Activated T-helper 1 cell treated with anti-CD3 and anti-CD28 coated beads, Interleukin-12 subunit alpha, Interleukin-12 subunit beta, Interleukin-2, Interleukin-4 antibody, amounts not matched to agents 30 ng/mL and 10 ng/mL and 1 ng/mL, durations not matched to agents 14 hours and 24 hours and 36 hours (primary cell): ENCODE measurements at regions of chr4 and their contacts with region 1.

Region 1: DNA sequence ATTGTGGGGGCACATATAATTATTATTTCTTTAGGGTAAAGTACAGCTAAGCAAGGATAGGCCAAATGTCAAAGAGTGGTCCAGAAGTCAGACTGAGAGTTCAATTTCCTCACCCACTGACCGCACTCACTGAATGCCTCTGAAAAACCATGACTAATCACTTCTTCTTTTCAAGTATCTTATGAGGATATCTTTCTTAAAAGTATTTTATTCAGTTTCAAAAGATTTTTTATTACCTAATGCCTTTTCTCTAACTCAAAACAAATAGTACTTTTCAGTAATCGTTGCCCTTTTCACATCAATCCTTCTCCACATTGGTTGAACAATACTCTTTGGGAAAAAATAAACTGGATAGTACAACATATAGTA is 61.7 kb upstream of the CAMK2D start:
- DNase-seq: no peak
- H3K4me3 Mint-ChIP-seq: no peak overlapping the region
- H3K27ac Mint-ChIP-seq: no peak overlapping the region
- H3K4me1 Mint-ChIP-seq: peaks cover 38% of the 10 kb centered on the region
- H3K27me3 Mint-ChIP-seq: no peaks in the 10 kb centered on the region

Region 2: DNA sequence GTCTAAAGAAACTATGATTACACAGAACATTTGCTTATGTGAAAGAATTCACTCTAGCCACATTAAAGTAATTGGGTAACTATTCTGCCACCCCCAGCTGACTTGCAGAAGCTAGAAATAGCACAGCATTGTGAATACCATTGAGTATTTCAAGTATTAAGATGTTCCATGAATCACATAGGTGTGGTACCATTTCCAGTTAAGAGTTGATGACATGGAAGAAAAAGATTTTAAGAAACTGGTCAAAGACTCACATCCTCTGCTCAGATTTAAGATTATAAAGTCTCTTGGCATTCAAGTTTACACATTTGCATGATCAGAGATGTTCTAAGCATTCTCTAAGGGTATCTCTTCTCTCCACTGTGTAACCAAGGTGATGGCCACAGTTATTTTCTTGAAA is 349.3 kb before region 1 on chr4:
- intact Hi-C with region 1: loop called (anchors 1 kb)
- DNase-seq: no peak
- H3K4me3 Mint-ChIP-seq: no peak overlapping the region
- H3K27ac Mint-ChIP-seq: peak overlapping the region; percentile 82
- H3K4me1 Mint-ChIP-seq: peaks cover 39% of the 10 kb centered on the region
- H3K27me3 Mint-ChIP-seq: no peaks in the 10 kb centered on the region

Region 3: DNA sequence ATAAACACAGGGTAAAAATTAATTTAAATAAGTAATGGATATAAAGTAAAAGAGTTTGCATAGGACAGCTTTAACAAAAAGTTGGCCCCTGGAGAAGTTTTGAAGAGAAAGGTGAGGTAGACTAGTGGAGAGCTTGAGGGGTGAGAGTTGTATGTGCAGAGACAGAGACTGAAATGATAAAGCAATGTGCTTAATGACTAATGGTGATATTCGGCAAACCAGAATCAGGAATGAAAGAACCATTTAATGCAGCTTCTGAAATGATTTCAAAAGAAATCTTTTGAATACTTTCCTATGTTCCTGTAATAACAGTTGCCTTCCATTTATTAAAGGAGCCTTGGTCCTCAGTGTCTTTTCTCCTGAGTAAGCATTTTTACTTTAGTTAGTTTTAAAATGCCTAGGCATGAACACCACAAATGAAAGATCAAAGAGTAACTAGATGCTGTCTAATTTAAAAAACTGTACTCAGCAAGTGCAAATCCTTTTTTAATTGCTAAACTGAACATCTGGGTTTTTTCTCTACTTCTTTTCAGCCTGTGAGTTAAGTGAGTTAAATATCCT is 90.2 kb before region 1 on chr4:
- intact Hi-C with region 1: loop called (anchors 1 kb)
- DNase-seq: no peak
- H3K4me3 Mint-ChIP-seq: no peak overlapping the region
- H3K27ac Mint-ChIP-seq: peak overlapping the region; percentile 19
- H3K4me1 Mint-ChIP-seq: peaks cover 68% of the 10 kb centered on the region
- H3K27me3 Mint-ChIP-seq: no peaks in the 10 kb centered on the region

Region 4: GRCh38 chr4:113781439-113782040 is 41.7 kb before region 1 on chr4:
- intact Hi-C with region 1: loop called (anchors 5 kb)
- DNase-seq: no peak
- H3K4me3 Mint-ChIP-seq: no peak overlapping the region
- H3K27ac Mint-ChIP-seq: no peak overlapping the region
- H3K4me1 Mint-ChIP-seq: peaks cover 10% of the 10 kb centered on the region
- H3K27me3 Mint-ChIP-seq: no peaks in the 10 kb centered on the region

Region 5: DNA sequence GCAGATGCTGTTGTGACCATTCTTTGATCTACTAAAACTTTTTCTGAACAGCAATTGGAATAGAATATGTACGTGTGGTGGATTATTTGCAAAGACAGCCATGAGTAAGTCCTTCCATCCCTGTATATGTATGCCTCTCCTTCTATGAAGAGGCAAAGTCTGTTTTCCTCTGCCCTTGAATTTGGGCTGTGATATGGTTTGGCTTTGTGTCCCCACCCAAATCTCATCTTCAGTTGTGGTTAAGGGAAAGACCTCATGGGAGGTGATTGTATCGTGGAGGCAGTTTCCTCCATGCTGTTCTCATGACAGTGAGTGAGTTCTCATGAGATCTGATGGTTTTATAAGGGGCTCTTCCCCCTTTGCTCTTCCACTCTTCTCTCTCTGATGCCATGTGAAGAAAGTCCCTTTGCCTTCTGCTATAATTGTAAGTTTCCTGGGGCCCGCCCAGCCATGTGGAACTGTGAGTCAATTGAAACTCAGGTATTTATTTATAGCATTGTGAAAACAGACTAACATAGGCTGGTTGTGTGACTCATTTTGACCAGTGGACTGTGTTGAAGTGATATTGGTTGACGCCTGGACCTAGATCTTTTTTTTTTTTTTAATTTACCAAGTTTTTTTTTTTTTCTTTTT is 46.6 kb after region 1 on chr4:
- intact Hi-C with region 1: loop called (anchors 2 kb)
- DNase-seq: peak; percentile 2
- H3K4me3 Mint-ChIP-seq: peak overlapping the region; percentile 53
- H3K27ac Mint-ChIP-seq: peak overlapping the region; percentile 88
- H3K4me1 Mint-ChIP-seq: peaks cover 16% of the 10 kb centered on the region
- H3K27me3 Mint-ChIP-seq: no peaks in the 10 kb centered on the region

Region 6: DNA sequence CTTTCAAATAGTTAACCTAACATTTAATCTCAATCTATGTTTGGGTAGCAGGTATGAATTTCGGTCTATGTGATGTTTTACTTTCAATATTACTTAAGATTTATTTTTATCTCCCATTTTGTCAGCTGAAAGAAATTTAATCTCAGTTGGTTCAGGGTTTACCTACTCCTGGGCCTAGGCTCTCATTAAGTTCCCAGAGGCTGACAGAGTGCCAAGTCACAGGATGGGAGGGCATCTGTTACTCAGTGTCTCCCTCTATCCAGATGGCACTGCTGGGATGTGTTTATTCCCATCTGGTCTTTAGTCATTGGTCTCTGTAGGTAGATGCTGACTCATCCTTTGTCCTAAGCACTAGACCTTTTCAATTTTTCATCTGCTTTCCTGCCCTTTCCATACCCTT is 285.6 kb after region 1 on chr4:
- intact Hi-C with region 1: no loop called
- DNase-seq: no peak
- H3K4me3 Mint-ChIP-seq: no peak overlapping the region
- H3K27ac Mint-ChIP-seq: no peak overlapping the region
- H3K4me1 Mint-ChIP-seq: no peaks in the 10 kb centered on the region
- H3K27me3 Mint-ChIP-seq: peaks cover 2% of the 10 kb centered on the region

Region 7: GRCh38 chr4:114178392-114178791 is 355.1 kb after region 1 on chr4:
- intact Hi-C with region 1: no loop called
- DNase-seq: no peak
- H3K4me3 Mint-ChIP-seq: no peak overlapping the region
- H3K27ac Mint-ChIP-seq: no peak overlapping the region
- H3K4me1 Mint-ChIP-seq: no peaks in the 10 kb centered on the region
- H3K27me3 Mint-ChIP-seq: no peaks in the 10 kb centered on the region